Heart right ventricle (tissue), 16 donors: ENCODE measurements at regions of chr6 and their contacts with region 1.

Region 1: GRCh38 chr6:6724539-6725467 is 136.3 kb downstream of the LY86 start:
- DNase-seq: peak; percentile 66 to 79
- ATAC-seq: peak; percentile 86 to 92 (median 89)
- H3K4me3 ChIP-seq: peak overlapping the region; percentile 15 to 55 (median 44)
- H3K27ac ChIP-seq: peak overlapping the region; percentile 79 to 98 (median 90)
- H3K4me1 ChIP-seq: peaks cover 7 to 49% (median 30%) of the 10 kb centered on the region in 9 donors
- H3K27me3 ChIP-seq: no peaks in the 10 kb centered on the region
- CTCF ChIP-seq: peak; percentile 50 to 90 (median 68)

Region 2: GRCh38 chr6:6676910-6677441 is 47.8 kb before region 1 on chr6:
- intact Hi-C with region 1: loop called in 2 of 10 experiments (anchors 5 kb)
- DNase-seq: peak; percentile 66 to 81
- ATAC-seq: peak; percentile 63 to 91 (median 86)
- H3K4me3 ChIP-seq: no peak overlapping the region
- H3K27ac ChIP-seq: peak overlapping the region; percentile 14 to 77 (median 63)
- H3K4me1 ChIP-seq: peaks cover 4 to 51% (median 27%) of the 10 kb centered on the region in 9 donors
- H3K27me3 ChIP-seq: no peaks in the 10 kb centered on the region
- CTCF ChIP-seq: peak; percentile 91 to 98 (median 96)

Region 3: GRCh38 chr6:6686748-6687601 is 37.8 kb before region 1 on chr6:
- intact Hi-C with region 1: loop called in 3 of 10 experiments (anchors 5 kb)
- DNase-seq: peak; percentile 95
- ATAC-seq: peak; percentile 91 to 96 (median 94)
- H3K4me3 ChIP-seq: peak overlapping the region; percentile 11 to 50 (median 38)
- H3K27ac ChIP-seq: peak overlapping the region in 9 of 10 donors; percentile 66 to 94 (median 88)
- H3K4me1 ChIP-seq: peaks cover 0 to 85% (median 41%) of the 10 kb centered on the region in 9 donors
- H3K27me3 ChIP-seq: no peaks in the 10 kb centered on the region
- CTCF ChIP-seq: no peak

Region 4: GRCh38 chr6:6781172-6781871 is 56.5 kb after region 1 on chr6:
- intact Hi-C with region 1: no loop called
- DNase-seq: peak; percentile 43 to 55
- ATAC-seq: peak in 4 of 8 donors; percentile 24 to 91 (median 52)
- H3K4me3 ChIP-seq: no peak overlapping the region
- H3K27ac ChIP-seq: no peak overlapping the region
- H3K4me1 ChIP-seq: peaks cover 3 to 22% (median 8%) of the 10 kb centered on the region in 9 donors
- H3K27me3 ChIP-seq: no peaks in the 10 kb centered on the region
- CTCF ChIP-seq: no peak

Region 5: GRCh38 chr6:7051233-7052114 is 326.7 kb after region 1 on chr6:
- intact Hi-C with region 1: loop called in 1 of 10 experiments (anchors 10 kb)
- DNase-seq: peak; percentile 38 to 64
- ATAC-seq: peak; percentile 58 to 86 (median 78)
- H3K4me3 ChIP-seq: peak overlapping the region; percentile 44 to 76 (median 67)
- H3K27ac ChIP-seq: peak overlapping the region in 9 of 10 donors; percentile 54 to 92 (median 74)
- H3K4me1 ChIP-seq: peaks cover 0 to 50% (median 21%) of the 10 kb centered on the region in 9 donors
- H3K27me3 ChIP-seq: peaks cover 0 to 6% (median 0%) of the 10 kb centered on the region in 7 donors
- CTCF ChIP-seq: no peak

Region 6: GRCh38 chr6:7107578-7108195 is 382.9 kb after region 1 on chr6 and contains the start of gene RREB1:
- intact Hi-C with region 1: loop called in 2 of 10 experiments (anchors 2 to 10 kb)
- DNase-seq: peak; percentile 62 to 70
- ATAC-seq: peak; percentile 66 to 85 (median 75)
- H3K4me3 ChIP-seq: peak within 1 kb of the TSS; percentile 71 to 99 (median 84)
- H3K27ac ChIP-seq: peak within 1 kb of the TSS; percentile 86 to 98 (median 95)
- H3K4me1 ChIP-seq: peaks cover 0 to 46% (median 34%) of the 10 kb centered on the region in 9 donors
- H3K27me3 ChIP-seq: no peaks in the 10 kb centered on the region
- CTCF ChIP-seq: no peak
- total RNA-seq, gene RREB1: 32.2 to 47.1 (median 36.8) TPM

Region 7: DNA sequence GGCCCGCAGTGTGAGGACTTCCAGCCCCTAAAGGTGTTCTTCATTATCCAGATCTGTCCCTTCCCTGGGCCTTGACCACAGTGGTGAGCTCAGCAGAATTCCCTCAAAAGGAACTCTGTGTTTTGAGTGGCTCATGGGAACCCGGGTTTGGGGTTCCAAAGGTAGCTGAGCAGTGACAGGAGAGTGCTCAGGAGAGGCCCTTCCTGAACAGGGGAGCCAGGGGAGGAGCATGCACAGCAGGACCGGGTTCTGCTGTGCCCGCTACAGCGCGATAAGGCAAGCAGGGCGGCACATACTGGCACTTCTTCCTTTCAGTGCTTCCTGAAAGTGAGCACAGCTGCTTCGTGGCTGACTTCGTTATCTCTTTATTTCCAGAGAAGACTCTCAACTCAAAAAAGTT is 499.9 kb after region 1 on chr6:
- intact Hi-C with region 1: loop called in 1 of 10 experiments (anchors 5 kb)
- DNase-seq: no peak
- ATAC-seq: peak in 7 of 8 donors; percentile 25 to 93 (median 72)
- H3K4me3 ChIP-seq: no peak overlapping the region
- H3K27ac ChIP-seq: peak overlapping the region in 9 of 10 donors; percentile 5 to 76 (median 42)
- H3K4me1 ChIP-seq: peaks cover 16 to 46% (median 35%) of the 10 kb centered on the region in 9 donors
- H3K27me3 ChIP-seq: no peaks in the 10 kb centered on the region
- CTCF ChIP-seq: no peak